CD4-positive, alpha-beta T cell (primary cell): ENCODE measurements at regions of chr17 and their contacts with region 1.

Region 1: DNA sequence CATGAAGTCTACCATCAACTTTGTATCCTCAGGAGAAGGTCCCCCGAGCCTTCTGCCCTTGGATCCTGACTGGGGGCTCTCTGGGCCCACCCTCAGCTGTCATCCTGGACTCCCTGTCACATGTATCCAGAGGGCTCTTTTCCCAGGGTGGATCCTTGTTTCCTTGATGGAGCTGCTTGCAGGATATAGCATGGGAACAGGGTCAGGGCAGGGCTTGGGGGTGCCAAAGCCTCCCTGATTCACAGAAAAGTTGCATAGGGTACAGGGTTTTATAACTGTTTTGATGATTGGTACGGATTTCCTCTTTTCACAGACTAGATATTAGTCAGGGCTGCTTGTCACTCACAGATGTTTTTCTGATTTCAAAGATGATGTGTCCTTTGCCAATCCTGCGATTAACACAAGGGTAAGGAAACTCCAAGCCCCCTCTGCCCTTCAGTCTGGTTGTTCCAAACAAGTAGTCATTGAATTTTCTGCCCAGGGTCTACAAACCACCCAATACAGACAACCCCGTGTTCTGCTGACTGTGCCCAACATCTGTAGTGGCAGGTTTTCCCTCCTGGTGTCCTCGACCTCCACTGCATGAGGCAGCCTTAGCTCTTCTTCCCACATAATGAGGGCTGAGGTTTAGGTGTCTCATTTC is 20.6 kb upstream of the SLC35G3 start:
- DNase-seq: peak in 13 of 14 experiments; percentile 13 to 72 (median 29)
- ATAC-seq: peak; percentile 52
- H3K4me3 ChIP-seq: peak overlapping the region; percentile 46
- H3K4me3 Mint-ChIP-seq: peak overlapping the region; percentile 18
- H3K27ac ChIP-seq: peak overlapping the region; percentile 75 to 89
- H3K27ac Mint-ChIP-seq: peak overlapping the region; percentile 91
- H3K4me1 ChIP-seq: peaks cover 75% of the 10 kb centered on the region
- H3K4me1 Mint-ChIP-seq: peaks cover 91% of the 10 kb centered on the region
- H3K27me3 ChIP-seq: no peaks in the 10 kb centered on the region
- H3K27me3 Mint-ChIP-seq: no peaks in the 10 kb centered on the region
- CTCF ChIP-seq: no peak

Region 2: DNA sequence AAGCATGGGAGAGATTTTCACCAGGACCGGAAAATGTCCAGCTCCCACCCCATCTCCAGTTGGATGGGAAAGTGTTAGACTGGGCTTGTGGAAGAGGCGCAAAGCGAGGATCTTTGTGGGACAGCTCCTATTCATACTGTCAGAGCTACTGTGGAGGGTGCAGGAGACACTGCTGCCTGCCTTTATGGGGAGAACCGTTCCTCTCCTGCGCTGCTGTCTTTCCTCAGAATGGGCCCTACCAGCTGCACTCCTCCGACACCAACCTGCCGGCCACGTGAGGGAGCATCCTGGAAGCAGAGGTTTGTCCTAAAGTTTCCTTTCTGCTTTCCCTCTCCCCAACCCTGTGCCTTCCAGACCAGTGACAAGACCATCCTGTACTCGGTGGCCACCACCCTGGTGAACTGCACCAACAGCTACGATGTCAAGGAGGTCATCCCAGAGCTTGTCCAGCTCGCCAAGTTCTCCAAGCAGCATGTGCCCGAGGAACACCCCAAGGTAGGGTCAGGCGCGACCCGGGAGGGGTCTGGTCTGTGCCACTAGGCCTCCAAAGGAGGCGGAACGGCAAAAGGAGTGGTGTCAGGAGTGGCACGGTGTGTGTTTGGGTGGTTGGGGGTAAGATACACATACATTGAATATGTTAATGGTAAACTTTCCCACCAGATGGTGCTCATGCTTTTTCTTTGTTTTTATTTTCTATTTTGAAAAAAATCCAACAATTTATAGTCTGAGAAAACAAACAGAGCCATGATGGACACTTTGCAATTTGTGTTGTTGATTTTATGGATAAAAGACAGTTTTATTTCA is 43.6 kb before region 1 on chr17:
- CTCF ChIA-PET with region 1: no interaction called
- POLR2A ChIA-PET with region 1: interaction called, 9 read pairs
- intact Hi-C with region 1: loop called (anchors 2 kb)
- DNase-seq: peak in 9 of 14 experiments; percentile 13 to 80 (median 42)
- ATAC-seq: peak; percentile 79
- H3K4me3 ChIP-seq: no peak overlapping the region
- H3K4me3 Mint-ChIP-seq: peak overlapping the region; percentile 80
- H3K27ac ChIP-seq: no peak overlapping the region
- H3K27ac Mint-ChIP-seq: peak overlapping the region; percentile 92
- H3K4me1 ChIP-seq: peaks cover 40% of the 10 kb centered on the region
- H3K4me1 Mint-ChIP-seq: peaks cover 52% of the 10 kb centered on the region
- H3K27me3 ChIP-seq: no peaks in the 10 kb centered on the region
- H3K27me3 Mint-ChIP-seq: no peaks in the 10 kb centered on the region
- CTCF ChIP-seq: peak; percentile 68

Region 3: DNA sequence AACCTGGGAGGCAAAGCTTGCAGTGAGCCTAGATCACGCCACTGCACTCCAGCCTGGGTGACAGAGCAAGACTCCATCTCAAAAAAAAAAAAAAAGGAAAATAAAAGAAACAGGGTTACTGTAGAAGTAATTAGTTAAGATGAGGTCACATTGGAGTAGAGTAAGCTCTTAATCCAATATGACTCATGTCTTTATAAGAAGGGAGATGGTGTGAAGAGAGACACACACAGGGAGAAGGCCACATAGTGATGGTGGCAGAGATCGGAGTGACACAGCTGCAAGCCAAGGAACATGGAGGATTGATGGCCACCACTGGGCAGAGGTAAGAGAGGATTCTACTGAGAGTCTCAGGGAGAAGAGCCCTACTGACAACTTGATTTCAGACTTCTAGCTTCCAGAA is 12.8 kb after region 1 on chr17:
- CTCF ChIA-PET with region 1: no interaction called
- POLR2A ChIA-PET with region 1: interaction called, 17 read pairs
- intact Hi-C with region 1: no loop called
- DNase-seq: no peak
- ATAC-seq: no peak
- H3K4me3 ChIP-seq: no peak overlapping the region
- H3K4me3 Mint-ChIP-seq: no peak overlapping the region
- H3K27ac ChIP-seq: no peak overlapping the region
- H3K27ac Mint-ChIP-seq: no peak overlapping the region
- H3K4me1 ChIP-seq: peaks cover 9% of the 10 kb centered on the region
- H3K4me1 Mint-ChIP-seq: peaks cover 74% of the 10 kb centered on the region
- H3K27me3 ChIP-seq: no peaks in the 10 kb centered on the region
- H3K27me3 Mint-ChIP-seq: no peaks in the 10 kb centered on the region
- CTCF ChIP-seq: no peak

Region 4: GRCh38 chr17:35265566-35266141 is 50.9 kb after region 1 on chr17:
- CTCF ChIA-PET with region 1: no interaction called
- POLR2A ChIA-PET with region 1: interaction called, 15 read pairs
- intact Hi-C with region 1: no loop called
- DNase-seq: no peak
- ATAC-seq: no peak
- H3K4me3 ChIP-seq: no peak overlapping the region
- H3K4me3 Mint-ChIP-seq: no peak overlapping the region
- H3K27ac ChIP-seq: peak overlapping the region in 1 of 2 donors; percentile 6
- H3K27ac Mint-ChIP-seq: peak overlapping the region; percentile 81
- H3K4me1 ChIP-seq: peaks cover 51% of the 10 kb centered on the region
- H3K4me1 Mint-ChIP-seq: peaks cover 77% of the 10 kb centered on the region
- H3K27me3 ChIP-seq: no peaks in the 10 kb centered on the region
- H3K27me3 Mint-ChIP-seq: no peaks in the 10 kb centered on the region
- CTCF ChIP-seq: no peak

Region 5: DNA sequence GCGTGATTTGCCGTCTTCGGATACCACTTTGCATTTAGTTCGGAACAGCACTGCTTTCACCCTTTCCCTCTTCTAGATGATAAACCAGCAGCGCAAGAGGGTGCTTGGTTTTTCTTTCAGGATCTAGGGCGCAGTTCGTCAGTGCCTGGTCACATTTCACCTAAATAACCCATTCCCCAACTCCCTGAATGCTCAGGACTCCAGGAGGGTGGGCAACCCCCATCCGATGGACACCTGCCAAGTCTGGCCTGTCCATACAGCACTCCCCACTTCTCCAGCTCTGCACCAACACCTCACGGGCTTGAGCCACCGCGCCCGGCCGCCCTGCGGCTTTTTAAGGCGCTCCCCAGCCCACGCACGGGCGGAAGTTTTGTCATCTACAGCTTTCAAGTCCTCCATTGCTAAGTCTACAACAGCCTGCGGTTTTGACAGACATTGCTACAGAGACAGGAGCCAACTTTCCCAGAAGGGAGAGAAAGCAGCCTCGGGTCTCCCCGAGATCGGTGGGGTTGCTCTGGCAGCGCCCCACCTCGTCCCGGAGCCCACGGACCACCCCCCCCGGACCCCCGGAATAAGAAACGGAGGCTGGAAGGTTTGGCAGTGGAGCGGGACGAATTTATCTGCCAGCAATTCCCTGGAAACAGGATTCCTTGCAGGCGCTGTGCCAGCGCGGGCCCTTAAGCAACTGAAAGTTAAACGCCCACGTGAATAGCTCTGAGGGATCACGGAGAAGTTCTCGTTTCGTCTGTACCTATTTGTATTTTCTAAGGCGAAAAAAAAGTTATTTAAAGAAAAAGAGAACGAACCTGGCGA is 272.4 kb after region 1 on chr17:
- CTCF ChIA-PET with region 1: no interaction called
- POLR2A ChIA-PET with region 1: interaction called, 28 read pairs
- intact Hi-C with region 1: no loop called
- DNase-seq: peak; percentile 35 to 89 (median 69)
- ATAC-seq: peak; percentile 72
- H3K4me3 ChIP-seq: peak overlapping the region; percentile 89
- H3K4me3 Mint-ChIP-seq: peak overlapping the region; percentile 95
- H3K27ac ChIP-seq: peak overlapping the region; percentile 76 to 82
- H3K27ac Mint-ChIP-seq: peak overlapping the region; percentile 96
- H3K4me1 ChIP-seq: peaks cover 38% of the 10 kb centered on the region
- H3K4me1 Mint-ChIP-seq: peaks cover 60% of the 10 kb centered on the region
- H3K27me3 ChIP-seq: no peaks in the 10 kb centered on the region
- H3K27me3 Mint-ChIP-seq: no peaks in the 10 kb centered on the region
- CTCF ChIP-seq: no peak

Region 6: DNA sequence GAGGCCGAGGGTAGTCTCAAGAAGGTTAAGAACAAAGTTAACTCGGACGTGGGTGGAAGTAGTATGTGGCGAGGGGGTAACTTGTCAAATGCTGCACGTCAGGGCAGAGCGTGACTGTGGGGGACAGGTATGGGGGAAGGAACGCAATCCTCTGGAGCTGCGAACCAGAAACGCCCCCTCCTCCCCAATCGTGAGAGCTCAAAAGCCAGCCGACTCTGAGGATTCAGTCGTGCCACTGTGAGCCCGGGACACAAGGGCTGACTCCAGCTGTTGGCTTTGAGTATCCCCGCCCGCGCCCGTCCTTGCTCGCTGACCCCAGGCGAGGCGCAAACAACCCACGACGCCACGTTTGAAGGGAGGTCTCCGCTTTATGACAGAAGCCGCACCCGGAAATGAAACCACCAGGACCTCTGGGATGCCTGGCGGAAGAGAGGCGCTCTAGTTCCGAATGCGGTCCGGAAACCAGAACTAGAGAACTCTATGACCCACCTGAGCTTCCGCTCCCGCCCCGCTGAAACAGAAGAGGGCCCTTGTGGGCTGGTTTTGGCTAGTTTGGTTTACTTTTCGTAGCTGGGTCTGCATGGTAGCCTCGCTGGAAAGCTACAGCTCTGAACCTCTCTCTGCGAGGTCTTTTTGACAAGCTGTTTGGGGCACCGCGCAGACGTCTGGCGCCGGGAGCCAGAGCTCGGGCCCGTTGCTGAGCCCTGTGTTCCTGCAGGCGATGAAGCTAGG is 363.6 kb after region 1 on chr17 and contains the start of gene PEX12:
- CTCF ChIA-PET with region 1: no interaction called
- POLR2A ChIA-PET with region 1: interaction called, 22 read pairs
- intact Hi-C with region 1: no loop called
- DNase-seq: peak; percentile 77 to 96 (median 86)
- ATAC-seq: peak; percentile 96
- H3K4me3 ChIP-seq: peak within 1 kb of the TSS; percentile 85
- H3K4me3 Mint-ChIP-seq: peak within 1 kb of the TSS; percentile 92
- H3K27ac ChIP-seq: peak within 1 kb of the TSS; percentile 90 to 93
- H3K27ac Mint-ChIP-seq: peak within 1 kb of the TSS; percentile 97
- H3K4me1 ChIP-seq: peaks cover 21% of the 10 kb centered on the region
- H3K4me1 Mint-ChIP-seq: peaks cover 42% of the 10 kb centered on the region
- H3K27me3 ChIP-seq: no peaks in the 10 kb centered on the region
- H3K27me3 Mint-ChIP-seq: no peaks in the 10 kb centered on the region
- CTCF ChIP-seq: no peak
- total RNA-seq, gene PEX12: 3.0 to 3.2 TPM